ENCODE measurements at regions of chr15 and their contacts with region 1.

Region 1: DNA sequence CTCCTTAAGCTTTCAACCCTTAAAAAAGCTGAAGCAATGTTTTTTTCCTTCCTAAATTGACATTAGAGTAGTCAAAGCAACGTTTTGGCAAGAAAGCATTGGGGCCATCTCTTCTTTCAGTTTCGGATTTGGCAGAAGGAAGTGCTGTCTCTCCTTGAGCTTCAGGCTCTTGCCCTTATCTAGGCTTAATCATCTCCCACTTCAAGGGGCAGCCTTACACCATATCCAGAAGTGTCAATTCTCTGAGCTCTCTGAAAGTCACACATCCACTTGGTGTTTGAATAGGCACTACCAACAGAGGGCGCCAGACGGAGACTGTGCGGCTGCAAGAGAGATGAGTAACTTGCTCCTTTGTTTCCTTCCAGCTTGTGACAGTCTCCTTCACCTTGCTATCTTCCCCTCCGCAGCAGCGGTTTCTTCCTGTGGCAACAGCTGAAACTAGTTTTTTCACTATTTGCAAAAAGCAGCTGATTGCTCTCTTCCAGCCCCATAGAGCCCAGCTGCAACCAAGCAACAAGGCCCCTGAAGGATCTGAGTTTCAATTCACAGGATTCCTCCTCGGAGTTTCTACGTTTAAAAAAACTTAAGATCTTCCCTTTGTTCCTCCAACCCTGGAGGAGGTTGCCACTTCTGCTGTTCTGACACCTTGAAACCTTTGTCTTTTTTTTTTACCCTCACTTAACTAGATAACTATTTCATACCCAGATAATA is 147.0 kb upstream of the SLCO3A1 start:
- DNase-seq: peak; percentile 79
- H3K4me3 ChIP-seq: no peak overlapping the region
- H3K27ac ChIP-seq: peak overlapping the region in 2 of 4 donors; percentile 33 to 37
- H3K4me1 ChIP-seq: peaks cover 0 to 3% (median 0%) of the 10 kb centered on the region in 4 donors
- H3K27me3 ChIP-seq: no peaks in the 10 kb centered on the region
- CTCF ChIP-seq: peak; percentile 77 to 89 (median 82)
- EP300 ChIP-seq: no peak
- POLR2A ChIP-seq: no peak

Region 2: GRCh38 chr15:91885714-91886270 is 179.3 kb after region 1 on chr15:
- in situ Hi-C with region 1: no loop called
- intact Hi-C with region 1: no loop called
- DNase-seq: no peak
- H3K4me3 ChIP-seq: no peak overlapping the region
- H3K27ac ChIP-seq: no peak overlapping the region
- H3K4me1 ChIP-seq: peaks cover 5 to 30% (median 21%) of the 10 kb centered on the region in 4 donors
- H3K27me3 ChIP-seq: no peaks in the 10 kb centered on the region
- CTCF ChIP-seq: peak in 2 of 5 experiments; percentile 20 to 23
- EP300 ChIP-seq: no peak
- POLR2A ChIP-seq: no peak

Region 3: DNA sequence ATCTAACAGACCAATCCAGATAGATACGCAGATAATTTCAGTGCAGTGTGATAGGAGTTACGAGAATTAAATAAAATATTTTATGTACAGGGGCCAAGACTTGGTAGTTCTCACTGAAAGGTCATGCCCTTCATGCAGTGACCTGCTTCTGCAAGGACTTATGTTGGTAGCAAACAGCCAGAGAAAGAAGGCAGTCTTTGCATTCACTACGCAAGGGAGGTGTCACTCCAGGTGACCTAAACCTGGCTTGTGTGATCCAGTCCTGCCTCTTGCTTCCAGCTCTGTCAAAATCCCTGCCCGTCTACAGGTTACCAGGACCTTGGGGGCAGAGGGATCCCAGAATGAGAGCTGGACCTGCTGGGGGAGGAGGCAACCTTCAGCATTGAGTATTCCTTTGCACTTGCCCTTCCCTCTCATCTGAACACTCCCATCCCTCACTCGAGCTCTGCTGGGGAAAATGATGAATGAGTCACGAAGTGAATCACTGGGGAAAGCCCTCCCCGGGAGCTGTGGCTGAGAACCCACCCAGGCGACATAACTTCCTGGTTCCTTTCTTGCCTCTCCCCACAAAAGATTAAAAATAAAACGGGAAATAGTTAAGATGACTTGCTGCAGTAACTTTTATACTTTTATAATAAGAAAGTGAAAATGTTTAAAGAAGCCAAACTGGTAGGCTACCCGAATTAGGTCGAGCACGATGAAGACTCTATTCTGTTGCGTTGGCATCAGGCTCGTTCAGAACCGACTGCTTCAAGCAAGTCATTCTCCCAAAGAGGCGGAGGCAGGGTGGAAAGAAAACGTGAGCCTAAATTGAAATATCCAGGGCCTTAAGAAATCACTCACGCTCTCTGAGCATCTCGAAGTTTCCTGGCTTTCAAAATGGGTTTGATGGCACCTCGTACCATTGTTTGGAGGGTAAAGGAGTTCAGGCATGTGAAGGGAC is 363.1 kb after region 1 on chr15:
- in situ Hi-C with region 1: loop called in 1 of 4 experiments (anchors 10 kb)
- intact Hi-C with region 1: no loop called
- DNase-seq: peak; percentile 32
- H3K4me3 ChIP-seq: no peak overlapping the region
- H3K27ac ChIP-seq: no peak overlapping the region
- H3K4me1 ChIP-seq: peaks cover 0 to 21% (median 3%) of the 10 kb centered on the region in 4 donors
- H3K27me3 ChIP-seq: no peaks in the 10 kb centered on the region
- CTCF ChIP-seq: no peak
- EP300 ChIP-seq: no peak
- POLR2A ChIP-seq: no peak